HepG2 (cell line): ENCODE measurements at regions of chrX and their contacts with region 1.

Region 1: DNA sequence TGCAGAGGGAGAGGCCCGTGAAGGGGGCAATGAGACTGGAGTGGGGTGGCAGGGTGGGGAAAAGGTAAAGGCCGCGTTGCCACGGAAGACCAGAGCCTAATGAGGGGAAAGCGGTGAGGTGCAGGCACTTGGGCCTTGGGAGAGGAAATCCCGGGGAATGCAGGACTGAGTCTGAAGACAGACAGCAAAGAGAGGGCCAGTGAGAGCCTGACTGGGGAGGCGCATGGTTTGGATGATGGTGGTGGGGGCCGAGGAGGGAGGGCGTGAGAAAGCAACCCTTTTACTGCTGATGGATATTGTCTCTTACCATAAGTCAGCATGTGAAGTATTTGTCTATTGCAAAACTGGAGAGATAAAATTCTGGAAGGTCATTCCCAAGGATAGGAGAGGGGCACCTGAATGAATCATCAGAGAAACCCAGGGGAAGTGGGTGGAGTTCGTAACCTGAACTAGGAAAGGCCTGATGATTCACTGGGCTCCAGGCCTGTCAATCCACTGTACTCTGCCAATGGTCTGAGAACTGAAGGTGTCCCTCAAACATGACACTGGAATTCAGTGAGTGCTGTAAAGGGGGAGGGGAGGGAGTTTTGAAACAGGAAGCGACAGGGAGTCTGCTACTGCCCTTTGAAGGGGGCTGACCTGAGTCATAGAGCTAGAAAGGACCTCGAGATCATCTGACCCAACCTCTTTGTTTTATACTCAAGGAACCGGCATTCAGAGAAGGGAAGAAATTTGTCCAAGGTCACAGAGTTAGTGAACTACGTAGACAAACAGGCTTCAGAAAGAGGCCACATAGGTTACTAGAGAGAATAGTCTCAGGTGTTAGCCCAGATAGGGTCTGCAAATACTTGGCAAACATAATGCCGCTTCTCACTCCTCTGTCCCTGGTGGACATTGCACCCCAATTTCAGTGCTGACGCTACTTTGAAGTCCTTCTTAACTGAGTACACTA is 52.2 kb downstream of the NALF2 start:
- DNase-seq: peak; percentile 99
- ATAC-seq: peak; percentile 95
- H3K4me3 ChIP-seq: peak overlapping the region; percentile 41 to 61 (median 45); a peak in 5 of 6 replicates
- H3K27ac ChIP-seq: peak overlapping the region; percentile 99
- H3K4me1 ChIP-seq: peaks cover 68% of the 10 kb centered on the region
- H3K27me3 ChIP-seq: no peaks in the 10 kb centered on the region
- CTCF ChIP-seq: no peak
- EP300 ChIP-seq: peak; percentile 57 to 78; a peak in 3 of 4 replicates
- POLR2A ChIP-seq: 0 out of 4 replicates have a peak, but pooled peaks have one; percentile 34 to 41
- RAD21 ChIP-seq: no peak

Region 2: GRCh38 chrX:69503782-69504625 is 52.3 kb before region 1 on chrX and contains the start of gene NALF2:
- CTCF ChIA-PET with region 1: no interaction called
- POLR2A ChIA-PET with region 1: interaction called, 3 read pairs
- in situ Hi-C with region 1: no loop called
- intact Hi-C with region 1: loop called (anchors 1 kb)
- DNase-seq: peak; percentile 59
- ATAC-seq: peak; percentile 76
- H3K4me3 ChIP-seq: peak within 1 kb of the TSS; percentile 55 to 75 (median 63); a peak in 5 of 6 replicates
- H3K27ac ChIP-seq: peak within 1 kb of the TSS; percentile 76
- H3K4me1 ChIP-seq: peaks cover 45% of the 10 kb centered on the region
- H3K27me3 ChIP-seq: no peaks in the 10 kb centered on the region; a peak in 1 of 5 replicates
- CTCF ChIP-seq: peak; percentile 16; the same call in 1 of the 2 replicates
- EP300 ChIP-seq: no peak
- POLR2A ChIP-seq: peak; percentile 21 to 67; a peak in 2 of 4 replicates
- RAD21 ChIP-seq: no peak
- total RNA-seq, gene NALF2: 3.0 and 4.0 TPM in 2 replicates